ENCODE measurements at regions of chr19 and their contacts with region 1.

Region 1: DNA sequence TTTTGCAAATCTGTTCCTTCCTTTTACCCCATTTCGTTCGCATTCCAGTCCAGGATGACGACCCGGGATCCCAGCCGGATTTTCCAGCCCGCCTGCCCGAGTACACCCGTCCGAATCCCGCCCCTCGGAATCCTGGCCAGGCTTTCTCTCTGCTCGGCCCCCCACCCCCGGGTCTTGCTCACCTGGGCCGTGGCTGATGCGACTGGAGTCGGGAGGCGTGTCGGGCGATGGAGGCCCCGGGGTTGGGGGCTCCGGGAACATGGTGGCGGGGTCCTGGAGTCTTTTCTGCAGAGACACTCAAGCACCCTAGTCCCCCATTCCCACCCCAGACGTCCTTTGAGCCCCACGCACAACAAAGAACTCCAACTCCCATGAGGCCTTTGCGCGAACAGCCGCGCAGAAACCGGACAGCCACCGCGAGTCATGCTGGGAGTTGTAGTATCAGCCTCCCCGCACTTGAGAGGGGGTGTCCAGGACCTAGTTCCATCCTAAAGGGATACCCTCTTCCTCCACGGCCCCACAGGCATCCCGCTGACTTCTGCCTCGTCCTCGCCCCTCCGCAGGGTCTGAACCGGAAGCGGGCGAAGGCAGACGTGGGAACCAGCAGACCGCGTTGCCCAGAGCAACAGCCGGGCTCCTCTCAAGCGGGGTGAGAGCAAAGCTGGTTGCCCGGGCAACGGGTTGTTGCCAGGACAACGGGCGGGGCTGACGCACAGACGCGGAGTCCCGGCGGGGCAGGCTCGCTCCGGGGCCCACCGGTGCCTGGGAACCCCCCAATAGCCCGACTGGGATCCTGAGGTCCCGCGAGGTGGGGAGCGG is 1.1 kb downstream of the SYT5 start:
- DNase-seq: no peak
- H3K4me3 ChIP-seq: peak overlapping the region; percentile 11
- CTCF ChIP-seq: no peak

Region 2: GRCh38 chr19:55071134-55071501 is 107.9 kb before region 1 on chr19:
- in situ Hi-C with region 1: no loop called
- DNase-seq: no peak
- H3K4me3 ChIP-seq: no peak overlapping the region
- CTCF ChIP-seq: no peak

Region 3: GRCh38 chr19:55258828-55259539 is 80.0 kb after region 1 on chr19 and contains the start of gene PPP6R1:
- in situ Hi-C with region 1: loop called (anchors 10 kb)
- DNase-seq: peak; percentile 100
- H3K4me3 ChIP-seq: peak within 1 kb of the TSS; percentile 82
- CTCF ChIP-seq: no peak

Region 4: GRCh38 chr19:55353803-55354697 is 175.1 kb after region 1 on chr19:
- in situ Hi-C with region 1: loop called (anchors 10 kb)
- DNase-seq: no peak
- H3K4me3 ChIP-seq: peak overlapping the region; percentile 43
- CTCF ChIP-seq: no peak

Region 5: DNA sequence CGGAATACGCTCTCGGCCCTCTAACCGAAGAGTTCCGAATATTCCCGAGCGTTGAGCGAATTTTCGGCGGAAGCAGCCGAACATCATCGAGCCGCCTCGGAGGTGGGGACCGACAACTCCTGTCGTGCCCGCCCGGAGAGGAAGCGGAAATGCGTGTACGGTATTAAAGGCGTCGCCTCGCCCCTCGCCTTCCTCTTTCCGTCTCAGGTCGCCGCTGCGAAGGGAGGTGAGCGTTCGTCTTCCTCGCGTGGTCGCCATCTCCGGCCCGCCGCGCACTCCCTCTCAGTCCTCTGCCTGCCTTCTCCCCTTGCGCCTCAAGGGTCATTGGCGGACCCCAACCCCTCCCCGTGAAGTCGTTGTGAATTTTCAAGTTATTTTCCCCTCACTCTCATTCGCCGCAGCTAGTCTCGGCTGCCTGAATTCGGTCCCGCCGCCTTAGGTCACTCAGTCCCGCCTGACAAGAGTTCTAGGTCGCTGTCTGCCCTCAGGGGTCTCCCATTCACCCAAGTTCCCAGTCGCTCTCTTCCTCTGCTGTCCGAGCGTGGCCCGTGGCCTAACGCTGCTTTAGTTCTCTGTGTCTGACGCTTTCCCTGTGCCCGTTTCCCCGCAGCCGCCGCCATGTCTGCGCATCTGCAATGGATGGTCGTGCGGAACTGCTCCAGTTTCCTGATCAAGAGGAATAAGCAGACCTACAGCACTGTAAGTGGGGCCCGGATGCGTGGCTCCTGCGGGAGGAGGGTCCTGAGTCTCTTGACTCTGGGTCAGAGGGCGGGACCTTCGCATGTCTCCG is 206.9 kb after region 1 on chr19 and contains the start of gene RPL28:
- in situ Hi-C with region 1: loop called (anchors 5 kb)
- DNase-seq: peak; percentile 97
- H3K4me3 ChIP-seq: peak within 1 kb of the TSS; percentile 97
- CTCF ChIP-seq: no peak

Region 6: DNA sequence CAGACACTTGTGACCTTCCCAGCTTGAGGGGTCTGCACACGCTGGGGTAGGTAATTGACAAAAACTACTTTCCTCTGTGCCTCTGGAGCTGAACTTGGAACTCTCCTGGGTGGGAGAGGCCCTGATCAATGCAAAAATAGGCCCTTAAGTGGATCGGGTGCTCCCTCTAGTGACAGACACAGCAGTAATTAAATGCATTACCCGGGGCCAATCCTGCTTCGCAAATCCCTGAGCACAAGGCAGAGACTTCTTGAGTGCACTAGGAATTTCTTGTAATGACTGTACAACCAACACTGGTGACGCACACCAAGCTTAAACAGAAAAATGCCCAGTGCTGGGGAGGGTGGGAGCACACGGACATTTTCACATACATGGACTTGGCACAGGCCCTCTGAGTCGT is 239.2 kb after region 1 on chr19:
- in situ Hi-C with region 1: loop called (anchors 10 kb)
- DNase-seq: peak; percentile 76
- H3K4me3 ChIP-seq: no peak overlapping the region
- CTCF ChIP-seq: peak; percentile 78